ENCODE measurements at regions of chr2 and their contacts with region 1.

Region 1: DNA sequence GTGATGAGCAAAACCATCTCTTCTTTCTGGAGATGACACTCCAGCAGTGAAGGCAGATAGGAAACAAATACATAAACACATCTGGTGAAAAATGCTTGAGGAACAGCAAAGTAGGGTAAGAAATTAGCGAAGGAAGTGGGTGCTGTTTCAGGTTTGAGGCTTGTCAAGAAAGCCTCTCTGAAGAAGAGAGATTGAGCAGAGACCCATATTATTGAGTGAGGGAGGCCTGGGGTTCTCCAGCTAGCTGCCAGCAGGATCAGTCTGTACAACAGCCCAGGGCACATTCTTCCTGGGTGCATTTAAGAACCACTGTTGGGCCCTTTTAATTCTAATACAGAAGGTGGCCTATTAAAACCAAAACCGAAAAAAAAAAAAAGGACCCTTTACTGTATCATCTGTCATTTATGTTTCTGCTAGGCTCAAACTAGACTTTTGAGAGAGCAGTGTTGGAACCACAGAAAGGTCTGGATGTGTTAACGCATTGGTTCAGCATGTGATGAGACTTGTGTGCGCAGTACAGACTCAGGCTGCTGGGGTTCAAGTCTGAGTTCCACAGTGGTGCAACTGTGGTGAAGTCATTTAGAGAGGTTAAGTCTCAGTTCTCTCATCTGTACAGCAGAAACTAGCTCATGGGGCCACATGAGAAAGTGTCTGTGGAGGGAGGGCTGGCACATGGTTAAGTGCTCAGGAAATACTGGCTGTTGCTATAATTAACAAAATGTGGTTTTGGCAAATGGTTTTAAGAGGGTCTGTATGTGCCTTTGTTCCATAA is 28.9 kb downstream of the MGAT5 start:
- DNase-seq: no peak
- H3K4me3 Mint-ChIP-seq: no peak overlapping the region
- H3K27ac Mint-ChIP-seq: no peak overlapping the region
- H3K4me1 Mint-ChIP-seq: no peaks in the 10 kb centered on the region
- H3K27me3 Mint-ChIP-seq: no peaks in the 10 kb centered on the region
- CTCF ChIP-seq: no peak

Region 2: DNA sequence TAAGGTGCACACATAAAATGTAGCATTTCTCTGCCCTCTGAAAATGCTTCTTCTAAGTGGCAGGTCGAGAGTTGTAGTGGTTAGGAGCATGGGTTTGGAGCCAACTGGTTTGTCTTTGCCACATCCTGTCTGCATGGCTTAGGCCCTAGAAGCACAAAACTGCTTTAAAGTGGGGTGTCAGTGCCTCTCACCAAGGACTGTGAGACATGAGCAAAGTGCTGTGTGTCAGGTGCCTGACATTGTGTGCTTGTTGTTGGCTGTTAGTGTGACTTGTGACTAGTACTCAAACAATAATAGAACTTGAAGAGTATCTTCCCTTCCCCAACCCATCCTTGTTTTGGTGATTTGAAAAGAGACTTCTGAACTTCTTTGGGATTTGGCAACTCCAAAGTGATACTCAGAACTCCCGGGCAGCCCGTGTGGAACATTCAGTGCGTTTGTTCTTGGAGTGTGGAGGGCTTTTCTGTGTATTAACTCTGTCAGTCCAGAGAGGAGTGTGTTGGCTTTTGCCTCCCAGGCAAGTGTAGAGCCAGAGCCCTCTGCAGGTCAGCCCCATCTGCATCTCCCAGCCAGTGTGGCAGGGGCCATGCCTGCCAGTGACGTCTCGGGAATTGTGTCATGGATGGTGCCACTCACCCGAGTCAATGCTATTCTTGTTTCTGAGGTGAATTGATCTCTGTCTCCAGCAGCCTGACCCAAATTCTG is 24.0 kb before region 1 on chr2:
- CTCF ChIA-PET with region 1: no interaction called
- POLR2A ChIA-PET with region 1: no interaction called
- intact Hi-C with region 1: no loop called
- DNase-seq: no peak
- H3K4me3 Mint-ChIP-seq: no peak overlapping the region
- H3K27ac Mint-ChIP-seq: no peak overlapping the region
- H3K4me1 Mint-ChIP-seq: peaks cover 9% of the 10 kb centered on the region
- H3K27me3 Mint-ChIP-seq: no peaks in the 10 kb centered on the region
- CTCF ChIP-seq: no peak

Region 3: GRCh38 chr2:134359367-134360081 is 76.7 kb after region 1 on chr2:
- CTCF ChIA-PET with region 1: no interaction called
- POLR2A ChIA-PET with region 1: no interaction called
- intact Hi-C with region 1: loop called (anchors 2 kb)
- DNase-seq: no peak
- H3K4me3 Mint-ChIP-seq: no peak overlapping the region
- H3K27ac Mint-ChIP-seq: no peak overlapping the region
- H3K4me1 Mint-ChIP-seq: no peaks in the 10 kb centered on the region
- H3K27me3 Mint-ChIP-seq: no peaks in the 10 kb centered on the region
- CTCF ChIP-seq: no peak

Region 4: DNA sequence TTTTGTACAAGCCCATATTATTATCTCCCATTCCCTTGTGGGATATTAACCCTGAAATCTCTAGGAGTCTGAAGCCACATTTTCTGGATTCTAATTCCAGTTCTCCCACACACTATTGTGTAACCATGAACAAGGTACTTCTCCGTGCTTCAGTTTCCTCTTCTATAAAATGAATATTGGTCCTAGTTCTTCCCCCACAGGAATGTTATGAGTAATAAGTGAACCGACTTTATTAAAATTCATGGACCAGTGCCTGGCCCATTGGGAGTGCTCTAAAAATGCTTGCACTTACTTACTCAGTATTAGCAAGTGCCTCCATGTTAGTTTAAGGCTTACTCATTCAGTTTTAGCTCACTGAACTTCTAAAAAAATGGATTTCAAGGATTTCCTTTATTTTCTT is 554.2 kb after region 1 on chr2:
- CTCF ChIA-PET with region 1: no interaction called
- POLR2A ChIA-PET with region 1: no interaction called
- intact Hi-C with region 1: no loop called
- DNase-seq: peak; percentile 71
- H3K4me3 Mint-ChIP-seq: no peak overlapping the region
- H3K27ac Mint-ChIP-seq: no peak overlapping the region
- H3K4me1 Mint-ChIP-seq: peaks cover 10% of the 10 kb centered on the region
- H3K27me3 Mint-ChIP-seq: no peaks in the 10 kb centered on the region
- CTCF ChIP-seq: no peak

Measured in MCF 10A (cell line).